ENCODE measurements at regions of chr2 and their contacts with region 1.

Region 1: GRCh38 chr2:181742922-181743722 is 62.8 kb upstream of the NEUROD1 start:
- H3K4me3 Mint-ChIP-seq: no peak overlapping the region
- H3K27ac Mint-ChIP-seq: no peak overlapping the region
- H3K4me1 Mint-ChIP-seq: no peaks in the 10 kb centered on the region
- H3K27me3 Mint-ChIP-seq: no peaks in the 10 kb centered on the region

Region 2: GRCh38 chr2:181528441-181528840 is 214.7 kb before region 1 on chr2:
- intact Hi-C with region 1: no loop called
- H3K4me3 Mint-ChIP-seq: no peak overlapping the region
- H3K27ac Mint-ChIP-seq: no peak overlapping the region
- H3K4me1 Mint-ChIP-seq: no peaks in the 10 kb centered on the region
- H3K27me3 Mint-ChIP-seq: no peaks in the 10 kb centered on the region

Region 3: GRCh38 chr2:181683518-181684453 is 59.3 kb before region 1 on chr2:
- intact Hi-C with region 1: no loop called
- H3K4me3 Mint-ChIP-seq: peak overlapping the region; percentile 31
- H3K27ac Mint-ChIP-seq: no peak overlapping the region
- H3K4me1 Mint-ChIP-seq: peaks cover 48% of the 10 kb centered on the region
- H3K27me3 Mint-ChIP-seq: peaks cover 83% of the 10 kb centered on the region

Region 4: GRCh38 chr2:181904022-181904632 is 161.0 kb after region 1 on chr2:
- intact Hi-C with region 1: loop called (anchors 1 kb)
- H3K4me3 Mint-ChIP-seq: no peak overlapping the region
- H3K27ac Mint-ChIP-seq: no peak overlapping the region
- H3K4me1 Mint-ChIP-seq: peaks cover 31% of the 10 kb centered on the region
- H3K27me3 Mint-ChIP-seq: no peaks in the 10 kb centered on the region

Region 5: GRCh38 chr2:181953881-181954537 is 210.9 kb after region 1 on chr2:
- intact Hi-C with region 1: loop called (anchors 1 kb)
- H3K4me3 Mint-ChIP-seq: peak overlapping the region; percentile 28
- H3K27ac Mint-ChIP-seq: no peak overlapping the region
- H3K4me1 Mint-ChIP-seq: no peaks in the 10 kb centered on the region
- H3K27me3 Mint-ChIP-seq: no peaks in the 10 kb centered on the region